Activated CD4-positive, alpha-beta T cell treated with anti-CD3 and anti-CD28 coated beads for 36 hours (primary cell): ENCODE measurements at regions of chr6 and their contacts with region 1.

Region 1: GRCh38 chr6:31087494-31088089 is 24.8 kb downstream of the C6orf15 start:
- DNase-seq: peak; percentile 94
- ATAC-seq: peak; percentile 96
- H3K4me3 Mint-ChIP-seq: no peak overlapping the region
- H3K27ac Mint-ChIP-seq: no peak overlapping the region
- H3K4me1 Mint-ChIP-seq: peaks cover 13% of the 10 kb centered on the region
- H3K27me3 Mint-ChIP-seq: no peaks in the 10 kb centered on the region

Region 2: GRCh38 chr6:30626484-30627366 is 460.9 kb before region 1 on chr6 and contains the start of gene ATAT1:
- CTCF ChIA-PET with region 1: no interaction called
- POLR2A ChIA-PET with region 1: no interaction called
- intact Hi-C with region 1: loop called in 1 of 2 experiments (anchors 1 kb)
- DNase-seq: peak; percentile 91
- ATAC-seq: peak; percentile 98
- H3K4me3 Mint-ChIP-seq: peak within 1 kb of the TSS; percentile 93
- H3K27ac Mint-ChIP-seq: peak within 1 kb of the TSS; percentile 96
- H3K4me1 Mint-ChIP-seq: peaks cover 21% of the 10 kb centered on the region
- H3K27me3 Mint-ChIP-seq: no peaks in the 10 kb centered on the region
- total RNA-seq, gene ATAT1: 7.1 to 9.2 TPM

Region 3: DNA sequence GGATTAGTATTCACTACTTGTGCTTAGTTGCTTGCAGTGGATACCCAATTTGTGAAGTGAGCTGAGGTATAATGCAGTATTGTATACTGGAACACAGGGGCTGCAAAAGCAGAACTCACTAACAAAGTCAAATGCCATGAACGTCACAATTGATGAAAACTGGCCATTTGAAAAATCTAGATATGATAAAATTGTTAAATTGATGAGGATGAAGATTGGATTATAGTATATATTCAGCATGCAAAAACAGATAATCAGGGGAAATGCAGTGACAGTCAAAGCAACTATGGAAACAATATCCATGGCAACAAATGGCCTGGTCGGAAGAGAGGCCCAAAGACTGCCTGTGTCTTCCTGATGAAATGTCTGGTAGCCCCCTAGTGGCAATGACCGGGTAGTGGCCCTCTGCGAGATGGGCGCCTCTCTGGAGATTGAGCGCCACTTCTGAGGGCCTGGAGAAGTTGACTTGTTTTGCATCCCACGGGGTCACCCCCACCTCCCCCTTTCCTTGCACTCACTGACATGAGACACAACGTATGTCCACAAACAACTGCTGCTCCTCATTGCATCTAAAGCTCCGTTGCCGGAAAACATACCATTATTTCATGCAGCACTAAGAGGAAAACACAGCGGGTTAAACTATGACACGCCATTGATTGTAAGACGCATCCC is 18.8 kb before region 1 on chr6:
- CTCF ChIA-PET with region 1: interaction called, 16 read pairs
- POLR2A ChIA-PET with region 1: no interaction called
- intact Hi-C with region 1: no loop called
- DNase-seq: peak; percentile 82
- ATAC-seq: peak; percentile 99
- H3K4me3 Mint-ChIP-seq: no peak overlapping the region
- H3K27ac Mint-ChIP-seq: no peak overlapping the region
- H3K4me1 Mint-ChIP-seq: peaks cover 2% of the 10 kb centered on the region
- H3K27me3 Mint-ChIP-seq: peaks cover 2% of the 10 kb centered on the region

Region 4: DNA sequence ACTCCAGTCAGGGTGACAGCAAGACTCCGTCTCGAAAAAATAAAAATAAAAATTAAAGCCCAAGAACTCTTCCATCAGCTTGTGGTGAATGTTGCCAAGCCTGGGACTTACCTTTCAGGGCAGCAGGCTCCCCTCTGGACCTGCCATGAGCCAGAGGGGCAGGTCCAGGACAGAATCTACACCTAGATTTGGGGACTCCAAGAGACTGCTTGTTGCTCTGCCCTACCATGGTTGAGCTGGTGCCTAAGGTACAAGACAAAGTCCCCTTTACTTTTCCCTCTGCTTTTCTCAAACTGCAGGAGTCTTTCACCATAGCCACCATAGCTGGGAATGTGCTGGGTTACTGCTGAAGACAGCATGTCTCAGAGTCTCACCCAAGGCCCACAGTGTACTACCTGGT is 15.5 kb after region 1 on chr6:
- CTCF ChIA-PET with region 1: interaction called, 10 read pairs
- POLR2A ChIA-PET with region 1: no interaction called
- intact Hi-C with region 1: no loop called
- DNase-seq: no peak
- ATAC-seq: no peak
- H3K4me3 Mint-ChIP-seq: no peak overlapping the region
- H3K27ac Mint-ChIP-seq: no peak overlapping the region
- H3K4me1 Mint-ChIP-seq: no peaks in the 10 kb centered on the region
- H3K27me3 Mint-ChIP-seq: no peaks in the 10 kb centered on the region

Region 5: GRCh38 chr6:31225735-31226134 is 138.1 kb after region 1 on chr6:
- CTCF ChIA-PET with region 1: no interaction called
- POLR2A ChIA-PET with region 1: no interaction called
- intact Hi-C with region 1: no loop called
- DNase-seq: no peak
- ATAC-seq: no peak
- H3K4me3 Mint-ChIP-seq: no peak overlapping the region
- H3K27ac Mint-ChIP-seq: no peak overlapping the region
- H3K4me1 Mint-ChIP-seq: no peaks in the 10 kb centered on the region
- H3K27me3 Mint-ChIP-seq: no peaks in the 10 kb centered on the region